Colonic mucosa (tissue), 4 donors: ENCODE measurements at regions of chr9 and their contacts with region 1.

Region 1: DNA sequence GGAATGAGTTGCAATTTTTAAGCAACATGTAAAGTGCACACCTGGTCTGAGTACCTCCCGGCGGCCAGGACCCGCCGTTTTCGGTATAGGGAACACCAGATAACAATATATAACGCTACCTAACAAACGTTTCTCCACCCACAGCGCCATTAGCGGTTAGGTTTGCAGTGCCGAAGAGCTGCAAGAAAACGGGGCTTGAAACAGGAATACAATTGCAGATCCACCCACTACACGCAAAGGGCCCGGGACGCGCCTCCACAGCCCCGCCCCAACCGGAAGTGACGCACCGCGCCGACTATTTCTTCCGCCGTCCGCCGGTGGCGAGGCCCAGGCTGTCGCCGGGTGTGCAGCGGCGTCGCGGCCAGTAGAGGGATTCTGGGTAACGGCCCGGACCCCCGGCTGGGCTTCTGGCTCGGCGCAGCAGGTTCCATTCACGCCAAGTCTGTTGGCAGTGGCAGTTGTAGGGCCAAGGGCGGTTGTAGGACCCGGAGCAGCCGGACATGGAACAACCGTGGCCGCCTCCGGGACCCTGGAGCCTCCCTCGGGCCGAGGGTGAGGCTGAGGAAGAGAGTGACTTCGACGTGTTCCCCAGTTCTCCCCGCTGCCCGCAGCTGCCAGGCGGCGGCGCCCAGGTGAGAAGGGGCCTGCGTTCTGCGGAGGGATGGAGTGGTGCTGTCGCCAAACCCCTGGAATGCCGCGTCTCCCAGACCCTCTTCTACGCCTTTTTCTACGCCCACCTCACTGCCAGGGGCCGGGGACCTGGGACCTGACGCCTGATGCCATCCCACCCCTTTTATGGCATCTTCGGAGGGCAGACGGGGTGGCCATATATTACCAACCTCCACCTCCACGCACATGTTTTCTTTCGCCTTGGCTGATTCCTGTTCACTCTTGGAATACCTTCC is at the start of gene CDC37L1:
- DNase-seq: peak; percentile 99
- H3K4me3 ChIP-seq: peak within 1 kb of the TSS; percentile 67
- H3K27ac ChIP-seq: peak within 1 kb of the TSS; percentile 93
- H3K4me1 ChIP-seq: peaks cover 3% of the 10 kb centered on the region
- H3K27me3 ChIP-seq: no peaks in the 10 kb centered on the region
- CTCF ChIP-seq: peak; percentile 57
- total RNA-seq, gene CDC37L1: 11.4 to 16.1 TPM

Region 2: DNA sequence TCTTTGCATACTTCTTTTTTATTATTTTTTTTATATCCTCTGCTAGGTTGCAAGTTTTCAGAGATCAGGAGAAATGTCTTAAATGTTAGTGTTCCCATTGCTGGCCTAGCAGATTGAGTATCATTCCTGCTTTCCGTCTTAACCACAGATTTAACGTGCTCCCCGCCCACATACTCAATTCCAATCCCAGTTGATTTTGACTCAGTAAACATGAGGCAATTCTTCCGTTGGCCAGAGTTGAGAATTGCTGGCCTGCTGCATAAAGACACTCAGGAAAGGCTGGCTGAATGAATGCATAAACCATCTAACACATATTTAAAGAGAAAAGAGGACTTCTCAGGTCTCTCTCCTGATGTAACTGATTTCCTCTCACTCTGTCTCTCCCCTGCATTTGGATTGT is 64.3 kb before region 1 on chr9:
- intact Hi-C with region 1: no loop called
- DNase-seq: no peak
- H3K4me3 ChIP-seq: no peak overlapping the region
- H3K27ac ChIP-seq: no peak overlapping the region
- H3K4me1 ChIP-seq: no peaks in the 10 kb centered on the region
- H3K27me3 ChIP-seq: no peaks in the 10 kb centered on the region
- CTCF ChIP-seq: no peak

Region 3: GRCh38 chr9:4873066-4873465 is 193.5 kb after region 1 on chr9:
- intact Hi-C with region 1: no loop called
- DNase-seq: no peak
- H3K4me3 ChIP-seq: no peak overlapping the region
- H3K27ac ChIP-seq: no peak overlapping the region
- H3K4me1 ChIP-seq: no peaks in the 10 kb centered on the region
- H3K27me3 ChIP-seq: no peaks in the 10 kb centered on the region
- CTCF ChIP-seq: no peak

Region 4: GRCh38 chr9:5832543-5833529 is 1153.3 kb after region 1 on chr9 and contains the start of gene ERMP1:
- intact Hi-C with region 1: loop called (anchors 10 kb)
- DNase-seq: peak; percentile 93
- H3K4me3 ChIP-seq: peak within 1 kb of the TSS; percentile 74
- H3K27ac ChIP-seq: peak within 1 kb of the TSS; percentile 74
- H3K4me1 ChIP-seq: peaks cover 5% of the 10 kb centered on the region
- H3K27me3 ChIP-seq: no peaks in the 10 kb centered on the region
- CTCF ChIP-seq: peak; percentile 89
- total RNA-seq, gene ERMP1: 47.3 to 50.8 TPM